Activated CD4-positive, alpha-beta T cell treated with anti-CD3 and anti-CD28 coated beads for 36 hours (primary cell): ENCODE measurements at regions of chr5 and their contacts with region 1.

Region 1: DNA sequence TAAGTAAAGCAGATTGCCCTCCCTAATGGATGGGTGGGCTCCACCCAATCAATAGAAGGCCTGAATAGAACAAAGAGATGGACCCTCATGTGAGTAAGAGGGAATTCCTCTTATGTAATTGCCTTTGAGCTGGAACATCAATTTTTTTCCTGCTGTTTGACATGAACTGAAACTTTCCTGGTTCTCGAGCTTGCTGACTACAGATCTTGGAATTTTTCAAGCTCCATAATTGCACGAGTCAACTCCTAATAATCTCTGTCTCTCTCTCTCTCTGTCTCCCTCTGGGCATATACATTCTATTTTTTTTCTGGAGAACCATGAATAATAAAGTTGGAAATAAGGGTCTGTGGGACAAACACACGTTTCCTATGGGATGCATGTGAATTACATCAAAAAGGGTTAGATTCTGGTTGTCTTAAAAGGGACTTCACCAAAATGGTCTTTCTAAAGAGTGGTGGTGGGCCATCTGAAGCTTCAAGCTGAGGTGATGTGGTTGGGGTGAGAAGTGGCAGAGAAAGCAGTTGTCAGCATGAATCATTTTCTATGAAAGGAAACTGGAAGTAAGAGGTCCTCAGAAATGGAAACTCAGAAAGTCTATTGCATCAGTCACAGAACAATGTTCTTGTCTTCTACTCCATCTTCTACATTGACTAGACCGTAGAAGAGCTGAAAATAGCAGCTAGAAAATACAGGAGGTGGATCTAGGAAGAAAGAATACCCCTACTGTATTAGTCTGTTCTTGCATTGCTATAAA is 47.0 kb upstream of the HOMER1 start:
- DNase-seq: peak; percentile 61
- ATAC-seq: peak; percentile 86
- H3K4me3 Mint-ChIP-seq: peak overlapping the region; percentile 34
- H3K27ac Mint-ChIP-seq: peak overlapping the region; percentile 99
- H3K4me1 Mint-ChIP-seq: peaks cover 44% of the 10 kb centered on the region
- H3K27me3 Mint-ChIP-seq: no peaks in the 10 kb centered on the region

Region 2: DNA sequence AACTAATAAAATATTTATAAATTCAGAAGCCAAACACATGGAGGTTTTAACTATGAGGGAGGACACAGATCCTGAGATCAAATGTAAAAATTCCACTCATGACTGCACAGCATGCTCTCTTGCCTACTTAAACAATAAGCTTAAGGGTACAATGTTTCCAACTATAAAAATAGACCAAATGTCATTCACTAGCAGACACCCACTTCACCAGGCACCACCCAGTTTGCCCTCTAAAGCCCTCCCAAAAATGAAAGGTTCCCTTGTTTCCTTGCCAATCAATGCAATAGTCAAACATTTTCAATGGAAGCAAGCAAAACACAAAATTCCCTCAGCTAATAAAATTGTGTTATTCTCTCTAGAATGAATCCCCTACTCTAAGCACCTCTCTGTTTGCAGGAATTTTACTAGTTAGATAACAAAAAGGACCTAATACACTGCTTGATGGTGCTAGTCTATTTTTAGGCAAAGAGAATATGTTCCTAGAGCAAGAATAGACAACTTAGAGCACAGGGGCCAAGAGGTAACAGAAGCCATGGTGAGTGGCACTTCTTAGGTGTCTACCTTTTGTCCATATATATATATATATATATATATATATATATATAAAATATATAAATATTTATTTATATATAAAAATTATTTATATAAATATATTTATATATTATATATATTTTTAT is 182.3 kb before region 1 on chr5:
- CTCF ChIA-PET with region 1: no interaction called
- POLR2A ChIA-PET with region 1: no interaction called
- intact Hi-C with region 1: no loop called
- DNase-seq: no peak
- ATAC-seq: no peak
- H3K4me3 Mint-ChIP-seq: no peak overlapping the region
- H3K27ac Mint-ChIP-seq: no peak overlapping the region
- H3K4me1 Mint-ChIP-seq: no peaks in the 10 kb centered on the region
- H3K27me3 Mint-ChIP-seq: no peaks in the 10 kb centered on the region

Region 3: DNA sequence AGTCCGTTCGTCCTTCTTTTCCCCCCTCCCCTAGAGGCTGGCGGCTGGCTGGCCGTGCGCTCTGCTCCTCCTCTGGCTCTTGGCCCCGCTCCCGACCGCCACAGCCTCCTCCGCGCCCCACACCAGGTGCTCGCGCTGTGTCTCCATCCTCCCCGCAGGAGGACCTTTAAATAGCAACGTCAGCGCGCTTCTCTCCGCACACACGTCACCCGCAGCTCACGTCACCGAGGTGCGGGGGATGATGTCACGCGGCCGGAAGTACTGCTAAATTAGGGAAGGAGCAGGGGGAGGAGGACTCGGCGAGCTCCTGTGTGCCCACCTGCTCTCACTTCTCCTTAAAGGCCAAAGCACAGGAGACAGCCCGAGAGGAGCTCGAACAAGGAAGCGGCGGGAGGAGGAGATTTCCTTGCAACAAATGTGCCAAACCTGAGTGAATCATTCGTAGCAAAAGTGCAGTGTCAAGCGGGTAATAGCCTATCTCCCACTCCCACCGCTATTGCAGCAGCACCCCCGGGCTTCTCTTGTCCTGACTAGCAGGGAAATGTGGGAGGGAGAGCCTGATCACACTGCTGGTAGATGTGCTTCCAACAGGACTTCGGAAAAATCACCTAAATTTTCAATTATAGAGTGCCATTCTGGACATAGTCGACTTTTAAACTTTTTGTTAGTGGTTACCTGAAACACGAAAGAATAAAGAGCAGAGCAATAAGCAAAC is 46.4 kb before region 1 on chr5:
- CTCF ChIA-PET with region 1: interaction called, 3 read pairs
- POLR2A ChIA-PET with region 1: no interaction called
- intact Hi-C with region 1: loop called (anchors 1 to 2 kb)
- DNase-seq: peak; percentile 94
- ATAC-seq: peak; percentile 82
- H3K4me3 Mint-ChIP-seq: peak overlapping the region; percentile 93
- H3K27ac Mint-ChIP-seq: peak overlapping the region; percentile 97
- H3K4me1 Mint-ChIP-seq: peaks cover 35% of the 10 kb centered on the region
- H3K27me3 Mint-ChIP-seq: peaks cover 15% of the 10 kb centered on the region

Region 4: DNA sequence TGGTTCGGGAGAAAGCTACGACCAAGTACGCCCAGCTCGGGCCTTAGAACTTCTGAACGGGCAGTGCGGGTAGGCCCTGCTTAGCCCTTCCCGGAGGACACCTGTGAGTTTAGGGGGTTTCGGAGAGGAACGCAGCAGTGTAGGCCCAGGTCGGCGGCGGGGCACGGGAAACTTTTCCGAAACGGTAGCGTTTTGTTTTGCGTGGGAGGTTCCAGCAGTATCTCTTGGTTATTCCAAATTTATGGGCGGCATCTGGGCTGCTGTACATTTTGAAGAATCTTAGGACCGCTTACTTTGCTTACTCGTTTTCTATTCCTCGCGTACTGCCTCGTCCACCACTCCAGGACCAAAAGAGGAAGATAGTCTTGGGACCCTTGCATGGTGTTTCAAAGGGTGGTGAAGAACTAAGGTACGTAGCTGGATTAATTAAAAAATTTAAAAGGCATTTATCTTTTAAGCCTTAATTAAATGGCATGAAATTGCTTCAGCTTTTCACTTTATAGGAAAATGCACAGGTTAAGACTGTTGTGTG is 51.8 kb after region 1 on chr5:
- CTCF ChIA-PET with region 1: interaction called, 5 read pairs
- POLR2A ChIA-PET with region 1: interaction called, 10 read pairs
- intact Hi-C with region 1: loop called (anchors 1 to 2 kb)
- DNase-seq: no peak
- ATAC-seq: no peak
- H3K4me3 Mint-ChIP-seq: peak overlapping the region; percentile 96
- H3K27ac Mint-ChIP-seq: peak overlapping the region; percentile 97
- H3K4me1 Mint-ChIP-seq: peaks cover 35% of the 10 kb centered on the region
- H3K27me3 Mint-ChIP-seq: no peaks in the 10 kb centered on the region

Region 5: DNA sequence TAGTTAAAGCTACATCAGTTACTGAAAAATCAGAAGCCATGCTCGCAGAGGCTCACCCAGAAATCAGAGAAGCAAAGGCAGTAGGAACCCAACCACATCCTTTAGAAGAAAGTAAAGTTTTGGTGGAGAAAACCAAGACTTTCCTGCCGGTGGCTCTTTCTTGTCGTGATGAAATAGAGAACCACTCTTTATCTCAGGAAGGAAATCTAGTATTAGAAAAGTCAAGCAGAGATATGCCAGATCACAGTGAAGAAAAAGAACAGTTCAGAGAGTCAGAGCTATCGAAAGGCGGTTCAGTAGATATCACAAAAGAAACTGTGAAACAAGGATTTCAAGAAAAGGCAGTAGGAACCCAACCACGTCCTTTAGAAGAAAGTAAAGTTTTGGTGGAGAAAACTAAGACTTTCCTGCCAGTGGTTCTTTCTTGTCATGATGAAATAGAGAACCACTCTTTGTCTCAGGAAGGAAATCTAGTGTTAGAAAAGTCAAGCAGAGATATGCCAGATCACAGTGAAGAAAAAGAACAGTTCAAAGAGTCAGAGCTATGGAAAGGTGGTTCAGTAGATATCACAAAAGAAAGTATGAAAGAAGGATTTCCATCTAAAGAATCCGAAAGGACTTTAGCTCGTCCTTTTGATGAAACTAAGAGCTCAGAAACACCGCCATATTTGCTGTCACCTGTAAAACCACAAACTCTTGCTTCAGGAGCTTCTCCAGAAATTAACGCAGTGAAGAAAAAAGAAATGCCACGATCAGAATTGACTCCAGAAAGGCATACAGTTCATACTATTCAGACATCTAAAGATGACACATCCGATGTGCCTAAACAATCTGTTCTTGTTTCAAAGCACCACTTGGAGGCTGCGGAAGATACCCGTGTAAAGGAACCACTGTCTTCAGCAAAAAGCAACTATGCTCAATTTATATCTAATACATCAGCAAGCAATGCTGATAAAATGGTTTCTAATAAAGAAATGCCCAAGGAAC is 175.9 kb after region 1 on chr5:
- CTCF ChIA-PET with region 1: no interaction called
- POLR2A ChIA-PET with region 1: interaction called, 6 read pairs
- intact Hi-C with region 1: loop called in 1 of 2 experiments (anchors 2 kb)
- DNase-seq: peak; percentile 12
- ATAC-seq: peak; percentile 86
- H3K4me3 Mint-ChIP-seq: peak overlapping the region; percentile 53
- H3K27ac Mint-ChIP-seq: peak overlapping the region; percentile 73
- H3K4me1 Mint-ChIP-seq: peaks cover 59% of the 10 kb centered on the region
- H3K27me3 Mint-ChIP-seq: peaks cover 28% of the 10 kb centered on the region

Region 6: GRCh38 chr5:79834754-79835714 is 274.1 kb after region 1 on chr5:
- CTCF ChIA-PET with region 1: no interaction called
- POLR2A ChIA-PET with region 1: no interaction called
- intact Hi-C with region 1: no loop called
- DNase-seq: no peak
- ATAC-seq: no peak
- H3K4me3 Mint-ChIP-seq: no peak overlapping the region
- H3K27ac Mint-ChIP-seq: no peak overlapping the region
- H3K4me1 Mint-ChIP-seq: no peaks in the 10 kb centered on the region
- H3K27me3 Mint-ChIP-seq: no peaks in the 10 kb centered on the region

Region 7: GRCh38 chr5:79845448-79846197 is 284.7 kb after region 1 on chr5:
- CTCF ChIA-PET with region 1: no interaction called
- POLR2A ChIA-PET with region 1: no interaction called
- intact Hi-C with region 1: loop called in 1 of 2 experiments (anchors 1 kb)
- DNase-seq: peak; percentile 70
- ATAC-seq: peak; percentile 94
- H3K4me3 Mint-ChIP-seq: no peak overlapping the region
- H3K27ac Mint-ChIP-seq: peak overlapping the region; percentile 33
- H3K4me1 Mint-ChIP-seq: peaks cover 11% of the 10 kb centered on the region
- H3K27me3 Mint-ChIP-seq: peaks cover 8% of the 10 kb centered on the region

Region 8: DNA sequence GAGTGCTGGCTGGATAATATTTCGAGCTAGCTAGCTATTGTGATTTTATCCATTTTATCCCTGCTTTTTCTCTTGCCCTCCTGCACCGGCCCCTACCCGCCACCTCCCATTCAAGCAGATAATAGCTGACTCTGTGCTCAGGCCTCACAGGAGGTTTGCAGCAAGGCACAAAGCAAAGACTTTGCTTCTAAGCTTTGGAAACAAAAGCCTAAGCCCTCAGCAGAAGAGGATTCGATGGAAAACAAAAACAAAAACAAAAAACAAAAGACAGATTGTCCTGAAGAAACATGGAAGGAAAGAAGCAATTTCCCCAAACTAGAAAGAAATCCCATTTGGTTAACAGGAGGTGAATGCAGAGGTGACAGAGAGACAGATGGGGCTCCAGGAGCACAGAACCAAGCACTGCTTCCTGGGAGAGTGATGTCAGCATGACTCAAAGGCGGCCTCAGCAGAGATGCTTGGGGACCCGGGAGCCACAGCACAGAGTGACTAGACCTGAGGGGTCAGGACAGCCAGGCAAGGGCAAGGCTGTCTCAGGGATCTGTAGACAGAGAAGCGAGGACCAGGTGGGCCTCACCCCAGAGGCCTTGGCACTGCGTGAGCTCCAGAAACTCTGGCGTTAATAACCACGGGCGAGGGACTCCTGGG is 401.8 kb after region 1 on chr5:
- CTCF ChIA-PET with region 1: no interaction called
- POLR2A ChIA-PET with region 1: no interaction called
- intact Hi-C with region 1: loop called in 1 of 2 experiments (anchors 2 kb)
- DNase-seq: peak; percentile 83
- ATAC-seq: peak; percentile 89
- H3K4me3 Mint-ChIP-seq: peak overlapping the region; percentile 15
- H3K27ac Mint-ChIP-seq: peak overlapping the region; percentile 93
- H3K4me1 Mint-ChIP-seq: peaks cover 32% of the 10 kb centered on the region
- H3K27me3 Mint-ChIP-seq: peaks cover 14% of the 10 kb centered on the region